Activated CD4-positive, alpha-beta T cell treated with anti-CD3 and anti-CD28 coated beads for 36 hours (primary cell): ENCODE measurements at regions of chr2 and their contacts with region 1.

Region 1: DNA sequence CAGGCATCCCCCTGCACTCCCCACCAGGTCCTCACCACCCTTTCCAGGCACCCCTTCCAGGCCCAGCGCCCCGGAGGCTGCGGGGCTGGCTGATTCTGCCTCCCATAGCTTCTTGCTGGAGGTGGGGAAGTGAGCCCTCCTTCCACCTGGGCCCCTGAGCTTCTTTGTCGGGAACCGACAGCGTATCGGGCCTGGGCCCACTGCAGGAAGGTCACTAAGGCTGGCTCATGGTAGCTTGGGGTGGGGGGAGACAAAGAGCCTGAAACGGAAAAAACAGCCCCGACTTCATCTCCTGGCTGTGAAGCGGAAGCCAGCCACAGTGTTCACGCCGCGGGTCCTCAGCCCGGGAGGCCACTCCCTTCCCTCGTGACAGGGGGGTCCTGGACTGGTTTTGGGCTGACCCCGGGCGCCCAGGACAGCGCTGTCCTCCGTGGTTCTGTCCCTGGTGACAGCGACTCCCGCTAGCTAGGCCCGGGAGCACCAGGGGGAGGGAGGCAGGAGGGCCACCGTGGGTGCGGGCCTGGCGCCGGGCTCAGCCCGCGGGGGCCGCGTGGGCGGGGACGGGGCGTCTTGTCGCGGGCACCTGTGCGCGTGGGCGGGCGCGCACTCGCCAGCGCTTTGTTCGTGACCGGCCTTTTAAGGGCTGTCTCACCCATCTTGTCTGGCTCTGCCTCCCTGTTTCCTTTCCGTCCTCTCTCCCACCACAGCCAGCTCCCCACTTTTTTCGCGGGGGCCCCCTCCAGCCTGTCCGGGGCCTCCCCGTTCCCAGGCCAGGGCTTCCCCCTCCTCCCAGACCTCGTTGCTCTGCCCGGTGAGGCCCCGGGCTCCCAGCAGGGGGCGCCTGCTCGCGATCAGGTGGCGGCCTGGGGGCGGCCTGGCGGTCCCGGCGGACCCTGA is 64.9 kb downstream of the DNMT3A start:
- DNase-seq: peak; percentile 90
- ATAC-seq: peak; percentile 65
- H3K4me3 Mint-ChIP-seq: peak overlapping the region; percentile 9
- H3K27ac Mint-ChIP-seq: peak overlapping the region; percentile 90
- H3K4me1 Mint-ChIP-seq: peaks cover 70% of the 10 kb centered on the region
- H3K27me3 Mint-ChIP-seq: no peaks in the 10 kb centered on the region

Region 2: DNA sequence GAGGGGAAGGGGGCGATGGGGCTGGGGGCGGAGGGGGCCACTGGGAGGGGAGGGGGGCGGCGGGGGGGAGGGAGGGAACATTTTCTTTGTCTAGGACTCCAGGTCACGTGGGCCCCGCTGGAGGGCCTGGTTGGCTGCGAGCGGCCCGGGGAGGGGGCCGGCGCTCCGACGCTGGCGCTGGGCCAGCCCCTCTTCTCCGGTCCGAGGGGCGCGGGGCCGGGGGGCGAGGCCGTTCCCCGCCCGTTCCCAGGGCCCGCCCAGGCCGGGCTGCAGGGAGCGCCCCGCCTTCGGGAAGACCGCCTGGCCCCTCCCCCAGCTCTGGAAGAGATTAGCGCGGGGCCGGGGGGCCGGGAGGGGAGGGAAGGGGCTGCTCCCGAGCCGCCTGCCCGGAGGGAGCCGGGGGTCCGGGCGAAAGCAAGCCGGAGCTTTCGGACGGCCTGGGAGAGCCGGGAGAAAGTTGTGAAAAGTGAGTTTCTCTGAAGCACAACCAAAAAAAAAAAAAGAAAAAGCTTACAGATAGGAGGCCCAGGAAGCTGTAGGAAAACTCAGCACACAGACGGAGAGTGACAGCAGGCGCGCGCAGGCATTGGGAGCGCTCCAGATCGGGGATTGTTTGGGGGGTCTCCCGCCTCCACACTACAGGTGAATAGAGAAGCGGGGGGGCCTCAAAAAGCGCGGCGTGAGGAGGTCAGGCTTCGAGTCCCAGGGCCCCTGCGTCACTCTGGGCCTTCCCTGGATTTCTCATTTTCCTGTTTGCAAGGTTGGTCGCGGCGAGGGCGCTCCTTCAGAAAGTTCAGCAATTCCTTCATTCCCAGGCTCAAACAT is 24.3 kb before region 1 on chr2:
- CTCF ChIA-PET with region 1: interaction called, 7 read pairs
- POLR2A ChIA-PET with region 1: interaction called, 3 read pairs
- intact Hi-C with region 1: loop called in 1 of 2 experiments (anchors 1 kb)
- DNase-seq: peak; percentile 77
- ATAC-seq: peak; percentile 55
- H3K4me3 Mint-ChIP-seq: peak overlapping the region; percentile 47
- H3K27ac Mint-ChIP-seq: peak overlapping the region; percentile 56
- H3K4me1 Mint-ChIP-seq: peaks cover 25% of the 10 kb centered on the region
- H3K27me3 Mint-ChIP-seq: no peaks in the 10 kb centered on the region

Region 3: GRCh38 chr2:25294573-25295462 is 18.0 kb after region 1 on chr2:
- CTCF ChIA-PET with region 1: interaction called, 12 read pairs
- POLR2A ChIA-PET with region 1: interaction called, 3 read pairs
- intact Hi-C with region 1: loop called in 1 of 2 experiments (anchors 2 kb)
- DNase-seq: peak; percentile 87
- ATAC-seq: peak; percentile 96
- H3K4me3 Mint-ChIP-seq: peak overlapping the region; percentile 54
- H3K27ac Mint-ChIP-seq: peak overlapping the region; percentile 92
- H3K4me1 Mint-ChIP-seq: peaks cover 59% of the 10 kb centered on the region
- H3K27me3 Mint-ChIP-seq: no peaks in the 10 kb centered on the region